Activated CD4-positive, alpha-beta memory T cell treated with anti-CD3 and anti-CD28 coated beads for 36 hours (primary cell): ENCODE measurements at regions of chr11 and their contacts with region 1.

Region 1: DNA sequence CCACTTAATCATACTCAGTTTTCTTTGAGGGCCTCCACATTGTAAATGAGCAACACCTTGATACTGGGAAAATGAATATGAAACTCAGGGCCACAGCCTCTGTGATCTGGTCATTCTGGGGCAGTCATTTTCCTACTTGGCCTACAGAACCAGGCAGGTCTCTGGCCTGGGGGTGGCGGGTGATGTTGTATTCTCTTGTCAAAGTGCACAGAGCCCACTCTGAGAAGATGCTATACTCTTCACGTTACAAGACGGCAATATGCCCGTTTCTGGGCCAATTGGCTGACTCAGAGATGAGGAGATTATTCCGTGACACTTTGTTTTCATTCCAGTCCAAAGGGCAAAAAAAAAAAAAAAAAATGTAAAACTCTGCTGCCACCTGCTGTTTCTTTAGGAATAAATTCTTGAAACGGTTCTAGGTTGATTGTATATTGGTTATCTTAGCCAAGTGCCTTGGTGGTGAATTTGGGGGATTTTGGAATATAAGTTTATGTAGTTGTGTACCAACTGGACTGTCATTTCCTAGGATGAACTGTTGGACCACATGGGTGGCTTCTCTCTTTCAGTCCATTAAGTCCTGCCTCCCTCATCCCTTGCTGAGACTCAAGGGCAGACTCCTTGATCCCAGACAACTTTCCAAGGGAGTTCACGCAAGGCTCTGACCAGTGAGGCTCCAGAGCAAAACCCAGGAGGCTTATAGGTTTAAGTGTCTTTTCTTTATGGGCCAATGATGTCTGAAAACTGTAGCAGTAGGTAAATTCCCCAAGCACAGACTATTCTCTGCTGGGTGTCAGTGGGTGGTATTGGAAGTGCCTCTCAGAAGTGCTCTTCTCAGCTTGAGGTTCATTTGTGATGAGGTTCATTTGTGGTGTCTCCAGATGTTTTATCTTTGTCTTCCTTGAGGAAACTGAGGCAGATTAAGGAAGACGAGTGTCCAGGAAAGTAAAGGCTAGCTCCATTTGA is 18.2 kb downstream of the ADM start:
- DNase-seq: peak; percentile 67
- H3K4me3 Mint-ChIP-seq: peak overlapping the region; percentile 48
- H3K27ac Mint-ChIP-seq: peak overlapping the region; percentile 77
- H3K4me1 Mint-ChIP-seq: peaks cover 13% of the 10 kb centered on the region
- H3K27me3 Mint-ChIP-seq: peaks cover 7% of the 10 kb centered on the region

Region 2: DNA sequence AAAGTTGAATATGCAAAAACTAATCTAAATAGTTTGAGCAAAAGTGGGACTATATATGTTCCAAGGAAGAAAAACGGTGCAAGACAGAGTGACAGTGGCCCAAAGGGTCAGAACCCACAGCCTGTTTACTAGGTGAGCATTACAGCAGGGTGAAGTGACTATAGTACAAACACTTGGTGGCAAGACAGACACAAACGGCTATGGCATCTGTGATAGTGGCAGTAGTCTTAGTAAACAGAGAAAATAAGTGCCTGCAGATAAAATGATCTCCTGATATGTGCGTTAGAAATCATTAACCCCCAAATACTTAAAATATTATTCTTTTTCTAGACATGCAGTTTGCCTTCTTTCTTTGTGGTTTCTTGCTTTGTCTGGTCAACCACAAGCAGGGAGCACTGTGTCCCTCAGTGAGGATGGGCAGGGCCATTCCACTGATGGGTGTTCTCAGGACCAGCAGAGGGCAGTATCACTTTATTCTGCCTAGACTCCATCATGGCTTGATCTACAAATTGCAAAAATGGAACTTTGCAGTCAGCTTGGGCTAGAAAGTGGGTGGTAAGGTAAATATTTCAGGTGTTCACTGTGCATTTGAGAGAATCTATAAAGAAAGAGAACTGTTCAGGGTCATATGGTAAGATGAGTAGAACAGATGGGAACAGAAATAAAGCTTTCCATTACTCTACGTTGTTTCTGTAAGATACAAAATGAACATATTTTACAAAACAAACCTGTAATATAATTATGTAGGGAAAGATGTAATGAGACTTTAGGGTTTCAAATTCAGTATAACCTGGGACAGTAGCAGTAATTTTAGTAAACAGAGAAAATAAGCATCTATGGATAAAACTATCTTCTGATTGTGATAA is 461.0 kb before region 1 on chr11:
- CTCF ChIA-PET with region 1: interaction called, 7 read pairs
- POLR2A ChIA-PET with region 1: no interaction called
- intact Hi-C with region 1: loop called (anchors 1 kb)
- DNase-seq: peak; percentile 65
- H3K4me3 Mint-ChIP-seq: no peak overlapping the region
- H3K27ac Mint-ChIP-seq: no peak overlapping the region
- H3K4me1 Mint-ChIP-seq: peaks cover 27% of the 10 kb centered on the region
- H3K27me3 Mint-ChIP-seq: no peaks in the 10 kb centered on the region

Region 3: GRCh38 chr11:9972989-9973388 is 350.1 kb before region 1 on chr11:
- CTCF ChIA-PET with region 1: interaction called, 11 read pairs
- POLR2A ChIA-PET with region 1: no interaction called
- intact Hi-C with region 1: loop called (anchors 1 kb)
- DNase-seq: peak; percentile 28
- H3K4me3 Mint-ChIP-seq: no peak overlapping the region
- H3K27ac Mint-ChIP-seq: no peak overlapping the region
- H3K4me1 Mint-ChIP-seq: no peaks in the 10 kb centered on the region
- H3K27me3 Mint-ChIP-seq: no peaks in the 10 kb centered on the region

Region 4: GRCh38 chr11:10366568-10367370 is 43.7 kb after region 1 on chr11:
- CTCF ChIA-PET with region 1: interaction called, 12 read pairs
- POLR2A ChIA-PET with region 1: no interaction called
- intact Hi-C with region 1: no loop called
- DNase-seq: peak; percentile 79
- H3K4me3 Mint-ChIP-seq: no peak overlapping the region
- H3K27ac Mint-ChIP-seq: no peak overlapping the region
- H3K4me1 Mint-ChIP-seq: peaks cover 6% of the 10 kb centered on the region
- H3K27me3 Mint-ChIP-seq: peaks cover 3% of the 10 kb centered on the region